ENCODE measurements at regions of chr6 and their contacts with region 1.

Region 1: DNA sequence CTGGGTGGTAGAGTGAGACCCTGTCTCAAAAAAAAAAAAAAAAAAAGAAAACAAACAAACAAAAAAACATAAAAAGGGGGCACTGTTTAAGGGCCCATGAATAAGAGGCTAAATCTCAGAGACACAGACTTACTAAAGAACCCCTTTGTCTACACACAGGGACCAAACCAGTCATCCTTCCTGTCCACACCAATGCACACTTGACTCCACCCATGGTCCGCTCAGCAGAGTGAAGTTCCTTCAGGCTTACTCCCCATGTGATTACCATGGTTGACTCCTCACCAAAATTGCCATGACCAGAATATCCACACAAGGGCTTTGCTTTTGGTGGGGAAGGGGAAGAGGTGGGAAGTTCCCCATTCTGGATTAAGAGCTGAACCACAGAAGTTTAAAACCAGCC is 19.4 kb upstream of the REPS1 start:
- DNase-seq: no peak
- ATAC-seq: peak; percentile 52
- H3K4me3 Mint-ChIP-seq: no peak overlapping the region
- H3K27ac Mint-ChIP-seq: no peak overlapping the region
- H3K4me1 Mint-ChIP-seq: peaks cover 13% of the 10 kb centered on the region
- H3K27me3 Mint-ChIP-seq: no peaks in the 10 kb centered on the region
- CTCF ChIP-seq: no peak

Region 2: GRCh38 chr6:139062932-139063646 is 55.7 kb after region 1 on chr6:
- CTCF ChIA-PET with region 1: no interaction called
- POLR2A ChIA-PET with region 1: no interaction called
- intact Hi-C with region 1: no loop called
- DNase-seq: no peak
- ATAC-seq: no peak
- H3K4me3 Mint-ChIP-seq: no peak overlapping the region
- H3K27ac Mint-ChIP-seq: no peak overlapping the region
- H3K4me1 Mint-ChIP-seq: no peaks in the 10 kb centered on the region
- H3K27me3 Mint-ChIP-seq: peaks cover 4% of the 10 kb centered on the region
- CTCF ChIP-seq: no peak

Region 3: DNA sequence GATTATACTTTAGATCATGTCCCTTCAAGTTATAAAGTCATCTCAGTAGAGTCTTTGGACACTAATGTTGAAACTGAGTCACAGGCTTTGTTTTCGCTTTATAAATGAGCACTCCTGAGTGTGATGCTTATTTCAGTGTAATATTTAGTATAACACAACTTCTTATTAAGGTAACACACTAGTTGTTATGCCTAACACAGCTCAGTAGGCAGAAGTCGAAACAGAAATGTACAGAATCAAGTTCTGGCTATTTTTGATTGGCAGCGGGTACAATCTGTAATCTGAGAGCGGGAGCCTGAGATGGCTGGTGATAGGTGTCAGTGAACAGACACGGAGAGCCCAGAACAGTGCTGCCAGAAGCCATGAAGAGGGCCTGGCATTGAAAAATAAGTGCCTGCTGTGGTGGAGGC is 138.9 kb after region 1 on chr6:
- CTCF ChIA-PET with region 1: no interaction called
- POLR2A ChIA-PET with region 1: interaction called, 14 read pairs
- intact Hi-C with region 1: no loop called
- DNase-seq: no peak
- ATAC-seq: peak; percentile 28
- H3K4me3 Mint-ChIP-seq: no peak overlapping the region
- H3K27ac Mint-ChIP-seq: no peak overlapping the region
- H3K4me1 Mint-ChIP-seq: peaks cover 87% of the 10 kb centered on the region
- H3K27me3 Mint-ChIP-seq: no peaks in the 10 kb centered on the region
- CTCF ChIP-seq: no peak

Region 4: DNA sequence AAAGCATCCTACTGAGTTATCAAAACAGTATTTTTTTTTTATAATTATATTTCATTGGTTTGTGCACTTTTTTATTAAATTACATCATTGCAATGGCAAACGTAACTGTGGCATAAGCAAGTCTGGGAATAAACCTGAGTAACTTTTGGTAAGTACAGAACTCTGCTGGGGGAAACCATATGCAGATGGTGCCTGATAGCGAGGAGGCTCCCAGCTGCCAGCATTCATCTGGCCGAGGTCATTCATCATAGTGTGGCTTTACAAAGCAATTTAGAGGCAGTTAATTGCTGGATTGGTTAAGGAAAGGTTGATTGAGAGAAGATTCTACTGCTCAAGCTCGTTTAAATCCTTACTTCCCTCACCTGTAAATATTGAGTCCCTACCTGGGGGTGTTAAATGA is 180.1 kb after region 1 on chr6:
- CTCF ChIA-PET with region 1: no interaction called
- POLR2A ChIA-PET with region 1: no interaction called
- intact Hi-C with region 1: no loop called
- DNase-seq: no peak
- ATAC-seq: no peak
- H3K4me3 Mint-ChIP-seq: no peak overlapping the region
- H3K27ac Mint-ChIP-seq: no peak overlapping the region
- H3K4me1 Mint-ChIP-seq: peaks cover 10% of the 10 kb centered on the region
- H3K27me3 Mint-ChIP-seq: no peaks in the 10 kb centered on the region
- CTCF ChIP-seq: no peak